Lower leg skin (tissue), 4 donors: ENCODE measurements at regions of chr14 and their contacts with region 1.

Region 1: GRCh38 chr14:52299692-52300278 is 14.3 kb upstream of the PTGER2 start:
- DNase-seq: no peak
- H3K4me3 ChIP-seq: no peak overlapping the region
- CTCF ChIP-seq: peak in 1 of 3 donors; percentile 41
- POLR2A ChIP-seq: no peak

Region 2: GRCh38 chr14:52473557-52473956 is 173.8 kb after region 1 on chr14:
- intact Hi-C with region 1: loop called (anchors 10 kb)
- DNase-seq: no peak
- H3K4me3 ChIP-seq: no peak overlapping the region
- CTCF ChIP-seq: no peak
- POLR2A ChIP-seq: no peak